K562 (cell line): ENCODE measurements at regions of chr1 and their contacts with region 1.

Region 1: GRCh38 chr1:223695941-223696340 is 16.4 kb upstream of the CAPN2 start:
- DNase-seq: no peak
- ATAC-seq: no peak
- H3K4me3 ChIP-seq: no peak overlapping the region
- H3K27ac ChIP-seq: no peak overlapping the region
- H3K4me1 ChIP-seq: peaks cover 10 to 15% of the 10 kb centered on the region in 2 experiments
- H3K27me3 ChIP-seq: no peaks in the 10 kb centered on the region
- CTCF ChIP-seq: no peak
- EP300 ChIP-seq: no peak
- POLR2A ChIP-seq: no peak
- RAD21 ChIP-seq: no peak

Region 2: GRCh38 chr1:223748773-223749733 is 53.1 kb after region 1 on chr1:
- CTCF ChIA-PET with region 1: interaction called, 40 read pairs
- POLR2A ChIA-PET with region 1: interaction called, 4 read pairs
- in situ Hi-C with region 1: no loop called
- intact Hi-C with region 1: loop called (anchors 1 kb)
- DNase-seq: peak; percentile 77 to 83 (median 80)
- ATAC-seq: peak; percentile 96
- H3K4me3 ChIP-seq: no peak overlapping the region
- H3K27ac ChIP-seq: no peak overlapping the region
- H3K4me1 ChIP-seq: peaks cover 0 to 13% of the 10 kb centered on the region in 2 experiments; a peak in 2 of 5 replicates
- H3K27me3 ChIP-seq: no peaks in the 10 kb centered on the region
- CTCF ChIP-seq: peak; percentile 94 to 97 (median 94)
- EP300 ChIP-seq: no peak
- POLR2A ChIP-seq: no peak
- RAD21 ChIP-seq: peak; percentile 91 to 94

Region 3: GRCh38 chr1:224223819-224224714 is 528.1 kb after region 1 on chr1:
- CTCF ChIA-PET with region 1: no interaction called
- POLR2A ChIA-PET with region 1: no interaction called
- in situ Hi-C with region 1: no loop called
- intact Hi-C with region 1: loop called (anchors 10 kb)
- DNase-seq: peak in 1 of 4 experiments; percentile 8
- ATAC-seq: peak; percentile 49
- H3K4me3 ChIP-seq: no peak overlapping the region
- H3K27ac ChIP-seq: no peak overlapping the region
- H3K4me1 ChIP-seq: peaks cover 0 to 6% of the 10 kb centered on the region in 2 experiments; a peak in 1 of 5 replicates
- H3K27me3 ChIP-seq: no peaks in the 10 kb centered on the region; a peak in 1 of 5 replicates
- CTCF ChIP-seq: no peak
- EP300 ChIP-seq: no peak
- POLR2A ChIP-seq: no peak
- RAD21 ChIP-seq: no peak